WTC11 (cell line): ENCODE measurements at regions of chr2 and their contacts with region 1.

Region 1: GRCh38 chr2:205982776-205983327 is 103.1 kb downstream of the INO80D start:
- DNase-seq: no peak
- ATAC-seq: no peak
- H3K4me3 Mint-ChIP-seq: no peak overlapping the region
- H3K27ac Mint-ChIP-seq: no peak overlapping the region
- H3K4me1 Mint-ChIP-seq: no peaks in the 10 kb centered on the region
- H3K27me3 Mint-ChIP-seq: no peaks in the 10 kb centered on the region; the same call in 1 of the 2 replicates
- CTCF ChIP-seq: no peak

Region 2: DNA sequence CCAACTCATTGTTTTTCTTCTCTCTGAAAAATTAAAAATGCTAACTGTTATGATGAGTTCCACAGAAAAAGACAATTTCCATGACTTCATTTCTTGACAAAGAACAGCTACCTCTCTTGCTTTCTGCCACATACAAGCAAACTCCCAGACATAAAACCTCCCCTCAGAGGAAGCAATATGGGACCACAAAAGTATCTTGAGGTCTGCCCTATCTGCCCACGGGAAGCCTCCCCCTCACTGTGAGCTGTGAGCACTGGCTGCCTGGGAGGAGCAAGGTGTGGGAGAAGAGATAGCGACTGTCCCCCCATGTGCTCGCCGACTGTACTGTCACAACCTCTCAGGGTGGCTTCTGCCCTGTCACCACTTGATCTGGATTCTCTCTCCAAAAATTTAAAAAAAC is 370.2 kb before region 1 on chr2:
- CTCF ChIA-PET with region 1: no interaction called
- POLR2A ChIA-PET with region 1: interaction called, 10 read pairs
- DNase-seq: no peak
- ATAC-seq: no peak; the same call in 1 of the 2 replicates
- H3K4me3 Mint-ChIP-seq: no peak overlapping the region
- H3K27ac Mint-ChIP-seq: no peak overlapping the region
- H3K4me1 Mint-ChIP-seq: peaks cover 26% of the 10 kb centered on the region
- H3K27me3 Mint-ChIP-seq: no peaks in the 10 kb centered on the region
- CTCF ChIP-seq: no peak